ENCODE measurements at regions of chr3 and their contacts with region 1.

Region 1: GRCh38 chr3:54951405-54951804 is 23.5 kb upstream of the LRTM1 start:
- DNase-seq: peak; percentile 78
- H3K4me3 Mint-ChIP-seq: no peak overlapping the region
- H3K27ac Mint-ChIP-seq: no peak overlapping the region
- H3K4me1 Mint-ChIP-seq: peaks cover 20% of the 10 kb centered on the region
- H3K27me3 Mint-ChIP-seq: no peaks in the 10 kb centered on the region
- CTCF ChIP-seq: peak; percentile 50

Region 2: GRCh38 chr3:54999159-54999558 is 47.8 kb after region 1 on chr3:
- CTCF ChIA-PET with region 1: no interaction called
- POLR2A ChIA-PET with region 1: no interaction called
- intact Hi-C with region 1: loop called (anchors 5 kb)
- DNase-seq: peak; percentile 85
- H3K4me3 Mint-ChIP-seq: no peak overlapping the region
- H3K27ac Mint-ChIP-seq: peak overlapping the region; percentile 31
- H3K4me1 Mint-ChIP-seq: peaks cover 14% of the 10 kb centered on the region
- H3K27me3 Mint-ChIP-seq: no peaks in the 10 kb centered on the region
- CTCF ChIP-seq: peak; percentile 25

Region 3: GRCh38 chr3:55620351-55621025 is 669.1 kb after region 1 on chr3:
- CTCF ChIA-PET with region 1: no interaction called
- POLR2A ChIA-PET with region 1: no interaction called
- intact Hi-C with region 1: loop called (anchors 1 kb)
- DNase-seq: peak; percentile 42
- H3K4me3 Mint-ChIP-seq: no peak overlapping the region
- H3K27ac Mint-ChIP-seq: no peak overlapping the region
- H3K4me1 Mint-ChIP-seq: peaks cover 16% of the 10 kb centered on the region
- H3K27me3 Mint-ChIP-seq: no peaks in the 10 kb centered on the region
- CTCF ChIP-seq: no peak

Measured in MCF 10A (cell line).